ENCODE measurements at regions of chr10 and their contacts with region 1.

Region 1: DNA sequence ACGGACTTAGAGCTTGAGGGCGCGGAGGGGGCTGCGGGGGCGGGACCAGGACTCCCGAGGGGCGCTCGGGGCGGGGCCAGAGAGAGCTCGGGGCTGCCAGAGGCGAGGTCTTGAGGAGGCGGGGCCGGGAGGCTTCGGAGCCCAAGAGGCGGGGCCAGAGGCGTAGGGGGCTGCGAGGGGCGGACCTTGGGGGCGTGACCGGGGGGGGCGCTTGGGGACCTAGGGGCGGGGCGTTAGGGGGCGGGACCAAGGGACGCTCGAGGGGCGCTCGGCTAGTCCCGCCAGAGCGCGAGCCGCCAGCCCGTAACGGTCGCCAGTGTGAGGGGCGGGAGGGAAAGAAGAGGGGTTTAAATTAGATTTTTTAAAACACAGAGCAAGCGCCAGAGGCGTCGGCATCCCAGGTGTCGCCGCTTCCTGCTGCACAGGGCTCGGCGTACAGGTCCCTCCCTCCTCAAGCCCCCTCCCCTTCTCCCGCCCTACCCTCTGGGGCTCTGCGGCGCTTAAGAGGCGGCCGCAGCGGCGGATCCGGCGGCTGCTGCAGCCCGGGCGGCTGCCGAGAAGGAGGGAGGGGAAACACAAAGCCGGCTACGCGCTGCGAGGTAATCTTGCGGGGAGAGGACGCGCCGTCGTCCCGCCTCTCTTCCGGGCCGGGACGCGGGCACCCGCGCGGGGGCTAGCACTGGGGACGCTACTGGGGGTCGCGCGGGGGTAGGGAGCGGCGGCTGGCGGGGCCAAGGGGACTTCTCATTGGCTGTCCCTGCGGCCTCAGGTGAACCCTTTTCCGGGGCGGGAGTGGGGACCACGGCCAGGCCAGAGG is at the start of gene ADD3:
- DNase-seq: peak; percentile 81
- H3K4me3 Mint-ChIP-seq: peak within 1 kb of the TSS; percentile 93
- H3K27ac Mint-ChIP-seq: peak within 1 kb of the TSS; percentile 81
- H3K4me1 Mint-ChIP-seq: peaks cover 47% of the 10 kb centered on the region
- H3K27me3 Mint-ChIP-seq: peaks cover 2% of the 10 kb centered on the region
- total RNA-seq, gene ADD3: 30.1 and 36.6 TPM in 2 replicates

Region 2: GRCh38 chr10:109922976-109923921 is 84.7 kb before region 1 on chr10 and contains the start of gene XPNPEP1:
- intact Hi-C with region 1: loop called (anchors 1 kb)
- DNase-seq: peak; percentile 81
- H3K4me3 Mint-ChIP-seq: peak within 1 kb of the TSS; percentile 94
- H3K27ac Mint-ChIP-seq: peak within 1 kb of the TSS; percentile 92
- H3K4me1 Mint-ChIP-seq: peaks cover 58% of the 10 kb centered on the region
- H3K27me3 Mint-ChIP-seq: peaks cover 5% of the 10 kb centered on the region
- total RNA-seq, gene XPNPEP1: 85.1 and 93.2 TPM in 2 replicates

Region 3: DNA sequence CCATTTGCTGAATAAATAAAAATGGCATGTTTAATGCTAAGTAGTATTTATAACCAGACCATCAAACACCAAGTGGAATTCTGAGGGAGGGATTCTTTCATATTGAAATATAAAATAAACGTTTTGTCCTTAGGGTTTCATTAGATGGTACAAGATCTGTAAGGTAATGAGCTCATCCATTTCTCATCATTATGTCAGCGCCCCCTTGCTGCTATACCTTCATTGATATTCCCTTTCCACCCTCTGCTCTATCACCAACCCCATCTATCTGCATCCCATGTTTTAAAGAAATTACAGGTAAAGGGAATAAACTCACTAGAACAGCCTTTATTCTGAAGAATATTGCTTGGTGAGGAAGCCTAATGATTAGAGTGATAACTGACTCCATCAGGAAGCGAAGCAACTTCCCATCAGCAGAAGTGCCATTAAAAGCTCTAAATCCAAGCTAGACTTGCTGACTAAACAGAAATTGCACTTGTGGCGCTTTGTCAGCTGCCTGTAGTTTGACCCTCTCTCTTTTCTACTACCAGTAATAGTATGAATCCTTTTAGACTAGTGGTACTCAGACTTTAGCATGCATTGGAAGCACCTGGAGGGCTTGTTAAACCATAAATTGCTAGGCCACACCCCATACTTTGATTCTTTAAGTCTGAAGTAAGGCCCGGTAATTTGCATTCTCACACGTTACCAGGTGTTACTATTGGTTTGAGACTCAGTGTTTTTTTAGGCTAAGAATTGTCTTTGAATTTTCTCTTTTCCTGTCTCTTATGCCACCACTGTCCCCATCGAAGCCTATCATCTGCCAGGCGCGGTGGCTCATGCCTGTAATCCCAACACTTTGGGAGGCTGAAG is 27.4 kb after region 1 on chr10:
- intact Hi-C with region 1: loop called (anchors 2 kb)
- DNase-seq: no peak
- H3K4me3 Mint-ChIP-seq: no peak overlapping the region
- H3K27ac Mint-ChIP-seq: no peak overlapping the region
- H3K4me1 Mint-ChIP-seq: peaks cover 54% of the 10 kb centered on the region
- H3K27me3 Mint-ChIP-seq: no peaks in the 10 kb centered on the region

Region 4: DNA sequence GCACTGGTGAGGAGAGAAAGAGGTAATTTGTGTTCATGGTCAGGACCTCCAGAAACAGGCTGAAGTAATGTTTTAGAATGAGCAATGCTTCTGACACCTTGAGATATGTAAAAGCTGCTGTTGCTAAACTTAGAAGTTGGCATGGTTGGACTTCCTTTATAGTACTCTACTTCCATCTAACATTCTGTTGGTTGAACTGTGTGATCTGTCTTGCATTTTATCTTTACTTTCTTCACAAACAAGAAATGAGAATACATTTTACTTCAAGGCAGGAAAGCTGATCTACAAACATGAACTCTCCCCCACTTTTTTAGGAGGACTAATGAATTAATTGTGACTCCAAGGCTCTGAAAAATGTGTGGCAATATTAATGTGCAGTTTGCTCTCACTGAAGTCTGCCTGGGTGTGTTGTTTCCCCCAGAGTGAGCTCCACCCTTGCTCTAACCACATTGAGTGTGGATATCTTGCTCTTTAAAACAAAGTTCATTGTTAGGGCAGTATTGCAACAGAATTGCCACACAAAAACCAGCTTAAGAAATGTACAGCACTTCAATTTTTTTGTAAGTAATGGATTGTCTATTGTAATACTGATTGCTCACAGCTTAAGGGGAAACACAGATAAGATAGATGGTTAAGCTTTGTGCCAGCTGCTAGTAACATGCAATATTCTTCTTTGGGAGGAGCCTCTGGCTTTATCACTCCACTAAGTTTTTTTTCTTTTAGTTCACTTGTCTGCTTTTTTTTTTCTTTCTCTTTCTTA is 68.8 kb after region 1 on chr10:
- intact Hi-C with region 1: loop called (anchors 1 kb)
- DNase-seq: no peak
- H3K4me3 Mint-ChIP-seq: peak overlapping the region; percentile 82
- H3K27ac Mint-ChIP-seq: peak overlapping the region; percentile 93
- H3K4me1 Mint-ChIP-seq: peaks cover 89% of the 10 kb centered on the region
- H3K27me3 Mint-ChIP-seq: no peaks in the 10 kb centered on the region

Region 5: GRCh38 chr10:110137142-110137545 is 129.2 kb after region 1 on chr10:
- intact Hi-C with region 1: loop called (anchors 1 kb)
- DNase-seq: no peak
- H3K4me3 Mint-ChIP-seq: no peak overlapping the region
- H3K27ac Mint-ChIP-seq: peak overlapping the region; percentile 1
- H3K4me1 Mint-ChIP-seq: peaks cover 33% of the 10 kb centered on the region
- H3K27me3 Mint-ChIP-seq: no peaks in the 10 kb centered on the region

Region 6: DNA sequence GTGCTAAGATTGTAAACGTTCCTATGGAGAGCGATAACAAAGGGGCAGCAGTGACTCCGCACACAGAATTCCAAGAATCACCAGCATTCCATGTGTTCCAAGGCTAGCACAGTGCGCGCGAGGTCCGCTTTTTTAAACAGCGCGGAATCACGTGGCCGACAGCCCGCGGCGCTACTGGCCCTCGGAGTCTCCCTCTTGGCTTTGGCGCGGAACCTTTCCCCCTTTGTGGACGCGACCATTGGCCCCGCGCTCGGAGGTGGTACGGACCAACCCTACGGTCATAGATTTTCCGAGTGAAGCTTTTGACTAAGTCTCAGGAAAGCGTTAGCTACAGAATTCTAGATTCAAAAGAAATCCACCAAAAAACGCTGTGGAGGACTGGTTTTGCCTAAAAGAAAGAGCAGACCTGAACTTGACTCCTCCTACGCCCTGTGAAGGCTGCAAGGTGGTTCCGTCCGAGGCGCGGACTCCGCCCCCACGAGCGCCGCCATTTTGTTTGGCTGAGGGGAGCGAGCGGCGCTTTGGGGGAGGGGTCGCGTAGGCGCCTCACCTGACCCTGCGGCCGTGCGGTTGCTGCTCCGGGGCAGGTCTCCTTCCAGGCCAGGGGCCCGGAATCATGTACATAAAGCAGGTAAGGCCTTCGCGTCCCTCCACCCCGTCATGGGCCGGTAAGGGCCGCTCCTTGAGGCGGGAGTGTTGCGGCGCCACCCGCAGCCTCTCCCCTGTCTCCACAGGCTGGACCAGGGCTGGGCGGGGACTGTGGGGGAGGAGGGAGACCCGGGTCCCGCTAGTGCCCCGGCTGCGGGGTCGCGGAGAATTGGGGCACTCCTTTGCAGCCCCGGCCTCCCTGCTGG is 559.5 kb after region 1 on chr10 and contains the start of gene SMC3:
- intact Hi-C with region 1: loop called (anchors 5 kb)
- DNase-seq: peak; percentile 89
- H3K4me3 Mint-ChIP-seq: peak within 1 kb of the TSS; percentile 93
- H3K27ac Mint-ChIP-seq: peak within 1 kb of the TSS; percentile 96
- H3K4me1 Mint-ChIP-seq: peaks cover 44% of the 10 kb centered on the region
- H3K27me3 Mint-ChIP-seq: peaks cover 14% of the 10 kb centered on the region
- total RNA-seq, gene SMC3: 74.5 and 77.9 TPM in 2 replicates

Measured in activated T-helper 1 cell treated with anti-CD3 and anti-CD28 coated beads, Interleukin-12 subunit alpha, Interleukin-12 subunit beta, Interleukin-2, Interleukin-4 antibody, amounts not matched to agents 30 ng/mL and 10 ng/mL and 1 ng/mL, durations not matched to agents 14 hours and 24 hours and 36 hours (primary cell).